Posterior vena cava (tissue), 2 donors: ENCODE measurements at regions of chr15 and their contacts with region 1.

Region 1: GRCh38 chr15:37100109-37100965 is at the start of gene MEIS2:
- DNase-seq: peak; percentile 98
- total RNA-seq, gene MEIS2: 54.0 to 55.2 TPM

Region 2: GRCh38 chr15:36501063-36501678 is 599.2 kb before region 1 on chr15:
- intact Hi-C with region 1: loop called in 1 of 2 experiments (anchors 10 kb)
- DNase-seq: no peak

Region 3: GRCh38 chr15:36883713-36884517 is 216.4 kb before region 1 on chr15:
- intact Hi-C with region 1: loop called in 1 of 2 experiments (anchors 10 kb)
- DNase-seq: peak; percentile 94

Region 4: DNA sequence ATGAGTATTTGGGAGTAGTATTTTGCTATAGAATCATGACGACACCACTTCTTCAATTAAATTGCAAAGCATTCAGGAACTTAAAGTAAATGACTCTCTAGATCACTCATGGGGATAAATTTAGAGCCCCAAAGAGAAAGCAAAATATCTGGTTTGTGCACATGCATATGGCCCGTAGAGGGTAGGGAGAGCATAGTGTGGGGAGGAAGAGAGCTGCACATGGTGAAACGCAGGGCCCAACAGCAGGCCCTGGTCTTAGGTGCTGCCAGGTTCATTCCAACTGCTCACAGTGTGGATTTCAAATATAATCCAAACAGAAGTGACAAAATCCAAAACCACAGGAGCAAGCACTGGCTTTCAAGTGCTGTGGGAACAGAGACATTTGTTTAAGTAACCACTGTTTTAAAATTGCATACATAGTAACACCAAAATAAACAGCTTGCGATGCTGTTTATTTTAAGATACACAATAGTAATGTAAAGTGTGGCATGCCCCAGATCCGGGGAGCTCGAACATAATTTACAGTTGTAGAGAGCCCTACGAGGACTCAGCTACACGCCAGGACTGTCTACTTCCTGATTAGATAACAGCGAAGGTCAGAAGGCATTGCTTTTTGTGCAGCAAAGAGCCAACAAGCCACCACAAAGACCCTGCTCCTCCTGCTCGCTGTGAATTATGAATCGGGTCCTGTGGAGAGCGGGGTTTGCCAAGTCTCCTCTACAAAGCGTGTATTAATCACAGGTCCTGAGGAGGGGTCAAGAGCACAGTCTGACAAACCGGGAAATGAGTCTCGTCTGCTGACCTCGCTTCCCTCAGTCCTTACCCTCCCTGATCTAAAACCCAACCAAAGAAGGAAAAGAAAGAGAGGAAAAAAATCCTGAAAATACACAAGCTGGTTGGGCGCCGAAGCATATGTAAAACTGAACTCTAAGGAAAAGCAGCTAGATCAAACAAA is 80.6 kb before region 1 on chr15:
- intact Hi-C with region 1: loop called (anchors 5 to 10 kb)
- DNase-seq: no peak

Region 5: DNA sequence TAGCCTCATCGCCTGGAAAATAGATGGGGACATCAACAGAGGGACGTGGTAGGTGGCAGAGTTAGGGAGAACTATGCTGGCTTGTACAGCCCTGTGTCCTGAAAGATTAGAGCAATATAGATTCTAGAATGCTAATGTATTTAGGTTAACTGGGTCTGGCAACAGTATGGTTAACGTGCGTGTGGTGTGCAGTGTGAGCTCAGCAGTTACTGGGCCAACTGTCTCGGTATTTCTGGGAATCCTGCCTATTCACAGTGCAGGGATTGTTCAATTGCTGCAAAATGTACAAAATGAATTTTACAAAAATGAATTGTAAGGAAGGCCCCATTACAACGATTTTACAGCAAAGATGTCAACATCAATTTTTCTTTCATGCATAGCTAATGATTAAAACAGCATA is 20.6 kb before region 1 on chr15:
- intact Hi-C with region 1: no loop called
- DNase-seq: no peak